Heart left ventricle (tissue), 16 donors: ENCODE measurements at regions of chr7 and their contacts with region 1.

Region 1: DNA sequence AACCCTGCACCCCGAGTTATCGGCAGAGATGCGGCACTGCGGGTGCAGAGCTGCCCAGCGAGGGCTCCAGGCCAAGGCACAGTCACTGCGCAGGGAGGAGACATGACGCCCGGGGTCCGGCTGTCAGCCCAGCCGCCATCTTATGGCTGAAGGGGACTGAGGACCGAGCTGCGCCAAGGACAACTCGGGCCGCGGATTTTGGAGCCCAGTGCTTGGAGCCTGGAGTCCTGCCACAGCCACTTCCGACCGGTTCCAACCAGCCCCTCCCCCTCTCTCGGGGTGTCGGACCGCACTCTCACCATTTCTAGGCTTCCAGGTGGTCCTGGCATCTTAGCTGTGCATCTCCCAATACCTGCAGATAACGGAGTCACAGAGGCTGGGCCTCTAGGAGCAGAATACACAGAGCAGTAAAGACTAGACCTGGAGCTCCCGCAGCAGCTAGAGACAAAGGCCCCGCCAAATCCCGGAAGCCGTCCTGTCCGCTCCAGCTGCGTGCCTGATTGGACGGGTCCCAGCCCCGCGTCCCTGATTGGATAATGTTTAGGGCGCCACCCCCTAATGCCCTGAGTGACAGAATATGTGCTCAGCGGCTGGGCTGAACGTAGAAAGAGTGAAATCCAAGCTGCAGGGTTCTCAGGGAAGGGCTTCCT is at the start of gene ZNF680:
- DNase-seq: peak; percentile 96 to 98 (median 97)
- ATAC-seq: peak; percentile 97 to 98 (median 98)
- H3K4me3 ChIP-seq: peak within 1 kb of the TSS; percentile 47 to 93 (median 84)
- H3K27ac ChIP-seq: peak within 1 kb of the TSS; percentile 76 to 94 (median 88)
- H3K4me1 ChIP-seq: peaks cover 0 to 51% (median 35%) of the 10 kb centered on the region in 12 donors
- H3K27me3 ChIP-seq: no peaks in the 10 kb centered on the region
- CTCF ChIP-seq: no peak
- POLR2A ChIP-seq: peak; percentile 29 to 91
- total RNA-seq, gene ZNF680: 10.9 to 25.9 (median 17.5) TPM

Region 2: DNA sequence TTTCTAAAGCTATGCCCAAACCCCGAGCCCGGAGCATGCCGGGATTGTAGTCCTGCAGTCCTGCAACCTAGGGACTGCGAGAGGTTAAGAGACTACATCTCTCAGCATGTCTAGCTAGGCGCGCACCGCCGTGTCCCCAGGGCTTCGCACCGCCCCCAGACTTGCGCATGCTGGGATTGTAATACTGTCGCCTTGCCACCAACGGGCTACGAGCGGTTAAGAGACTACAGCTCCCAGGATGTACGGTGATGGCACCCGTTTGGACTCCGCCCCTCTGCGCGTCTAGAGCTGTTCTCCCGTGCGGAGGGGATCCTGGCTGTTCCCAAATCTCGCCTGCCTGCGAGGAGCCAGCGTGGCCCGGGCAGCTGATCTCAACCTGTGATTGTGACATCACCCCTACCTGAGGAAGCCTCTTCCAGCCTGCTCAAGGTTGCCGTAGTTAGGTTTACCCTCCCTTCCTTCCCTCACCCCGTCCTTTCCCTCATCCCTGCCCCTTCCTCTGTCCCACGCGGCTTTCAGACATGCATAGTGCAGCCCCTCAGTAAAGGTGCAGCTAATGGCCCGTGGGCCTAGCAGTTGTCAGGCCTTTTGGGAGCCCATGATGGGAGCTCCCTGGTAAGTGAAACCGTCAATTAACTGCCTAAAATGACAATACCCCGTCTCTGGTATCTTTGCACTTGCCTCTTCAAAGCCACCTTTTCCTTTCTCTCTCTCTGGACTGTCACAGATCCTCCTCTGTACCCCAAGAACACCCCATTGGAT is 255.3 kb before region 1 on chr7:
- intact Hi-C with region 1: loop called in 6 of 10 experiments (anchors 5 to 10 kb)
- DNase-seq: peak; percentile 91 to 96 (median 95)
- ATAC-seq: peak; percentile 99 to 100 (median 99)
- H3K4me3 ChIP-seq: peak overlapping the region; percentile 46 to 82 (median 68)
- H3K27ac ChIP-seq: peak overlapping the region; percentile 48 to 92 (median 80)
- H3K4me1 ChIP-seq: peaks cover 0 to 18% (median 7%) of the 10 kb centered on the region in 12 donors
- H3K27me3 ChIP-seq: no peaks in the 10 kb centered on the region
- CTCF ChIP-seq: peak in 2 of 12 donors; percentile 17 to 20
- POLR2A ChIP-seq: peak in 1 of 2 donors; percentile 44

Region 3: DNA sequence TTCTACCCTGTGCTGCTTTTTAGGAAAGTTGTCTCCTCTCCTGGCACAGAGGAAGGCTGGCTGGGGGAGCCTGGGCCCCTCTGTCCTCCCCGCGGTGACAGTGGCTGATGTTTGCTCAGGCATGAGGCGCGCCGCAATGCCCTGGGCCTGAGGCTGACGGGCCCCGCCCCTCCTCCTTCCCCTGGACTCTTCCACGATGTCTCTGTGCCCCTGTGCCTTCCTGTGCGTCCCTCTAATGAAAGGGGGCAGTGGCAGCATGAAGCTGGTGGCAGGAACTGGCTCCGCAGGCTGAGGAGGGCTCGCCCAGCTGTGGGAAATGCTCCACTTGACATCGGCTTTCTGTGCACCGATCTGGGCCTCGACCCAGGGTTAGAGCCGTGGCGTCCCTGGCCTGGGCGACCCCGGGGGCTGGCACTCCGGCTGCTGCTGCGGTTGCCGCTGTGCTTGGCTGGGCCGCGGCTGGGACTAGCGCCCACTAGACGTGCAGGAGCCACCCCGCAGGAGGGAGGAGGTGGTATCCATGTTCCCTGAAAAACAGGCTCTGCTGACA is 67.8 kb before region 1 on chr7:
- intact Hi-C with region 1: loop called in 2 of 10 experiments (anchors 10 kb)
- DNase-seq: no peak
- ATAC-seq: peak; percentile 26 to 78 (median 62)
- H3K4me3 ChIP-seq: peak overlapping the region in 7 of 12 donors; percentile 10 to 51 (median 36)
- H3K27ac ChIP-seq: no peak overlapping the region
- H3K4me1 ChIP-seq: peaks cover 0 to 8% (median 0%) of the 10 kb centered on the region in 12 donors
- H3K27me3 ChIP-seq: no peaks in the 10 kb centered on the region
- CTCF ChIP-seq: no peak
- POLR2A ChIP-seq: no peak

Region 4: GRCh38 chr7:64515330-64515729 is 47.4 kb before region 1 on chr7:
- intact Hi-C with region 1: loop called in 1 of 10 experiments (anchors 10 kb)
- DNase-seq: no peak
- ATAC-seq: peak in 1 of 4 donors; percentile 65
- H3K4me3 ChIP-seq: no peak overlapping the region
- H3K27ac ChIP-seq: peak overlapping the region in 2 of 12 donors; percentile 7 to 11
- H3K4me1 ChIP-seq: peaks cover 0 to 15% (median 6%) of the 10 kb centered on the region in 12 donors
- H3K27me3 ChIP-seq: no peaks in the 10 kb centered on the region
- CTCF ChIP-seq: no peak
- POLR2A ChIP-seq: no peak

Region 5: DNA sequence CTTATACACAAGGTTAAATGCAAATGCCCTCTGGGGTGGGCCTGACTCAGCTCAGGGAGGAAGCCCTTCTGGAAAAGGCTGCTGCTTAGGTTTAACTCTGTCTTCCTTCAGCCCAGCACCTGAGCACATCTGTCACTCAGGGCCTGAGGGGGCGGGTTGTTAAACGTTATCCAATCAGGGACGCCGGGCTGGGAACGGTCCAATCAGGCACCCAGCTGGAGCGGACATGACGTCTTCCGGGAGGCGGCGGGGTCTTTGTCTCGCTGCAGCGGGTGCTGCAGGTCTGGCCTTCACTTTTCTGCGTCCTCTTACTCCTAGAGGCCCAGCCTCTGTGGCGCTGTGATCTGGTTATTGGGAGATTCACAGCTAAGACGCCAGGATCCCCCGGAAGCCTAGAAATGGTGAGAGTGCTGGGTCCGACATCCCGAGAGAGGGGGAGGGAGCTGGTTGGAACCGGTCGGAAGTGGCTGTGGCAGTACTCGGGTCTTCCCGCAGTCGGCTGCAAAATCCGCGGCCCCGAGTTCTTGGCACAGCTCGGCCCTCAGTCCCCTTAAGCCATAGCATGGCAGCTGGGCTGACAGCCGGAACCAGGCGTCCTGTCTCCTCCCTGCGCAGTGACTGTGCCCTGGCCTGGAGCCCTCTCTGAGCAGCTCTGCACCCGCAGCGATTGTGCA is 231.6 kb after region 1 on chr7 and contains the start of gene ZNF138:
- intact Hi-C with region 1: loop called in 1 of 10 experiments (anchors 10 kb)
- DNase-seq: peak; percentile 95 to 98 (median 96)
- ATAC-seq: peak; percentile 100
- H3K4me3 ChIP-seq: peak within 1 kb of the TSS; percentile 40 to 97 (median 83)
- H3K27ac ChIP-seq: peak within 1 kb of the TSS; percentile 43 to 88 (median 81)
- H3K4me1 ChIP-seq: peaks cover 0 to 22% (median 12%) of the 10 kb centered on the region in 12 donors
- H3K27me3 ChIP-seq: no peaks in the 10 kb centered on the region
- CTCF ChIP-seq: peak in 1 of 12 donors; percentile 17
- POLR2A ChIP-seq: peak in 1 of 2 donors; percentile 60
- total RNA-seq, gene ZNF138: 3.1 to 8.1 (median 4.9) TPM